ENCODE measurements at regions of chr11 and their contacts with region 1.

Region 1: GRCh38 chr11:102293873-102294601 is 23.2 kb upstream of the BIRC3 start:
- DNase-seq: no peak
- H3K4me3 Mint-ChIP-seq: peak overlapping the region; percentile 79
- H3K27ac Mint-ChIP-seq: peak overlapping the region; percentile 95
- H3K4me1 Mint-ChIP-seq: peaks cover 42% of the 10 kb centered on the region
- H3K27me3 Mint-ChIP-seq: no peaks in the 10 kb centered on the region

Region 2: GRCh38 chr11:102305352-102306047 is 11.5 kb after region 1 on chr11:
- intact Hi-C with region 1: loop called (anchors 1 kb)
- DNase-seq: no peak
- H3K4me3 Mint-ChIP-seq: peak overlapping the region; percentile 78
- H3K27ac Mint-ChIP-seq: peak overlapping the region; percentile 84
- H3K4me1 Mint-ChIP-seq: peaks cover 56% of the 10 kb centered on the region
- H3K27me3 Mint-ChIP-seq: no peaks in the 10 kb centered on the region

Region 3: GRCh38 chr11:102359372-102359771 is 65.3 kb after region 1 on chr11:
- intact Hi-C with region 1: no loop called
- DNase-seq: no peak
- H3K4me3 Mint-ChIP-seq: no peak overlapping the region
- H3K27ac Mint-ChIP-seq: no peak overlapping the region
- H3K4me1 Mint-ChIP-seq: peaks cover 41% of the 10 kb centered on the region
- H3K27me3 Mint-ChIP-seq: no peaks in the 10 kb centered on the region

Measured in activated T-helper 2 cell treated with anti-CD3 and anti-CD28 coated beads, Interferon-gamma antibody, Interleukin-2, Interleukin-4, amounts not matched to agents 10 μg/mL and 5 μg/mL and 100 μg/mL, durations not matched to agents 14 hours and 24 hours and 36 hours (primary cell).